ENCODE measurements at regions of chr3 and their contacts with region 1.

Region 1: GRCh38 chr3:185942907-185943759 is 5.3 kb upstream of the TRA2B start:
- DNase-seq: peak; percentile 81 to 84 (median 83)
- H3K4me3 ChIP-seq: peak overlapping the region in 1 of 2 donors; percentile 55
- H3K4me3 Mint-ChIP-seq: peak overlapping the region; percentile 43 to 76 (median 66)
- H3K27ac ChIP-seq: no peak overlapping the region
- H3K27ac Mint-ChIP-seq: peak overlapping the region in 5 of 7 donors; percentile 32 to 75 (median 62)
- H3K4me1 ChIP-seq: peaks cover 14% of the 10 kb centered on the region
- H3K4me1 Mint-ChIP-seq: peaks cover 6 to 24% (median 14%) of the 10 kb centered on the region in 4 donors
- H3K27me3 ChIP-seq: no peaks in the 10 kb centered on the region
- H3K27me3 Mint-ChIP-seq: peaks cover 2 to 3% of the 10 kb centered on the region in 2 donors

Region 2: DNA sequence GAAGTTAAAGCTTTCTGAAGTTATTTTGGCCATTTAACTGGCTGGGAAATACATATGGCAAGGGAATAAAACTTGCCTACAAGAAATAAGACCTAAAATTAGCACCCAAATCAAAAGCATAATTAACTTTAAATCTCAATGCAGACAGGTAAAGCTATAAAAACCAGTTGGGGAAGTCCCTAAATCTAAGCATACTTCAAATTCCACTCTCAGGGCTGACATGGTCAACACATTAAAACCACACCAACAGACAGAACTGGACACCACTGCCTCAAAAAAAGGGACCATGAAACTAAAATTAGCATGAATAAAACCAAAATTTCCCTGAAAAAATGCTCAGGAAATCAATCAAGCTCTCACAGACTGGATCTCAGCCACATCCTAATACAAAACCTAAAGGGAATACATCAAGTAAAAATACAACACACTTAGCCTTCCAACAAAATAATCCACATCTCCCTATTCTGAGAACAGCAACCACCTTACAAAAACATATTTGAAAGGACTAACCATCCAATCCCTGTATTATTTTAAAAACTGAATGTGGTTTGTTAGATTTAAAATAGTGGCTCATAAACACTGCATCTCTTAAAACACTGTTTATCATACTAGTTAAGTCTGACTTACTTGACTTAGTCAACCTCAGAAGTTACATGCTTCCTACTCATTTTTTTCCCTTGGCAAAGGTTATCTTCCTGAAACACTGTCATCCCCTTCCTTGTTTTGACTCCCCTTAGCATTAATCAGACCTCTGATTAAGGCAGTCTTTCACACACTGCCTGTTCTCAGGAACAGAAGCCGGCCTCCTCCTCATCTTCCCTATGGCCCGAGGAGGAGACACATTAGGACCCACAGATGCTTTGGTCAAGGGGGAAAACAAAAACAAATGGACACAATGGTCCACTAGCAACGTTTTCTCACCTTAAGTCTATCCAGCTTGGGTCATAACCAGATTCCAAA is 13.7 kb before region 1 on chr3:
- CTCF ChIA-PET with region 1: interaction called, 143 read pairs
- POLR2A ChIA-PET with region 1: interaction called, 95 read pairs
- intact Hi-C with region 1: no loop called
- DNase-seq: no peak
- H3K4me3 ChIP-seq: peak overlapping the region in 1 of 2 donors; percentile 37
- H3K4me3 Mint-ChIP-seq: peak overlapping the region; percentile 42 to 100 (median 83)
- H3K27ac ChIP-seq: peak overlapping the region; percentile 45
- H3K27ac Mint-ChIP-seq: peak overlapping the region; percentile 2 to 100 (median 73)
- H3K4me1 ChIP-seq: peaks cover 99% of the 10 kb centered on the region
- H3K4me1 Mint-ChIP-seq: peaks cover 76 to 100% (median 91%) of the 10 kb centered on the region in 4 donors
- H3K27me3 ChIP-seq: no peaks in the 10 kb centered on the region
- H3K27me3 Mint-ChIP-seq: no peaks in the 10 kb centered on the region

Region 3: DNA sequence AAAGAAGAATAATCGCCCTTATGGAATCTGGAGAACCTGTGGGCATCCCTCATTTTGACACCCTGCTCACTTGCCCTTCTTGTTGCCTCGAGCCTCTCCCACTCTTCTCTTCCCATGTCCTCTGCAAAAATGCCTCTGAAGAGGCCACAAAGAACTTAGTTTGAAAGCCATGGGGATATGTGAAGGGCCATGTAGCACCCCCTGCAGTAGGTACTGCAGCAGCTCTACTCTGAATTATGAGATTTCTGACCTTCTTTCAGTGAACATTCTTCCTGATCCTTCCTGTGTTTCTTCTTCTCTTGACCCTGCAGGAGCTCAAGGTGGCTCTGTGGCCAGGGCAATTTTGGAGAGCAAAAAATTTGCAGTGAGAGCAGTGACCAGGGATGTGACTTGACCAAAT is 25.0 kb after region 1 on chr3:
- CTCF ChIA-PET with region 1: interaction called, 16 read pairs
- POLR2A ChIA-PET with region 1: no interaction called
- intact Hi-C with region 1: no loop called
- DNase-seq: no peak
- H3K4me3 ChIP-seq: no peak overlapping the region
- H3K4me3 Mint-ChIP-seq: no peak overlapping the region
- H3K27ac ChIP-seq: no peak overlapping the region
- H3K27ac Mint-ChIP-seq: no peak overlapping the region
- H3K4me1 ChIP-seq: no peaks in the 10 kb centered on the region
- H3K4me1 Mint-ChIP-seq: no peaks in the 10 kb centered on the region
- H3K27me3 ChIP-seq: no peaks in the 10 kb centered on the region
- H3K27me3 Mint-ChIP-seq: peaks cover 0 to 2% of the 10 kb centered on the region in 2 donors

Region 4: GRCh38 chr3:186520957-186521842 is 578.1 kb after region 1 on chr3:
- CTCF ChIA-PET with region 1: interaction called, 12 read pairs
- POLR2A ChIA-PET with region 1: interaction called, 14 read pairs
- intact Hi-C with region 1: no loop called
- DNase-seq: no peak
- H3K4me3 ChIP-seq: no peak overlapping the region
- H3K4me3 Mint-ChIP-seq: peak overlapping the region in 2 of 8 donors; percentile 29 to 53
- H3K27ac ChIP-seq: no peak overlapping the region
- H3K27ac Mint-ChIP-seq: peak overlapping the region; percentile 16 to 96 (median 57)
- H3K4me1 ChIP-seq: peaks cover 57% of the 10 kb centered on the region
- H3K4me1 Mint-ChIP-seq: peaks cover 35 to 63% (median 49%) of the 10 kb centered on the region in 4 donors
- H3K27me3 ChIP-seq: no peaks in the 10 kb centered on the region
- H3K27me3 Mint-ChIP-seq: no peaks in the 10 kb centered on the region

Region 5: GRCh38 chr3:187130346-187131066 is 1187.4 kb after region 1 on chr3:
- CTCF ChIA-PET with region 1: no interaction called
- POLR2A ChIA-PET with region 1: no interaction called
- intact Hi-C with region 1: loop called (anchors 5 kb)
- DNase-seq: peak; percentile 74 to 86 (median 83)
- H3K4me3 ChIP-seq: peak overlapping the region in 1 of 2 donors; percentile 37
- H3K4me3 Mint-ChIP-seq: peak overlapping the region; percentile 22 to 82 (median 74)
- H3K27ac ChIP-seq: peak overlapping the region; percentile 74
- H3K27ac Mint-ChIP-seq: peak overlapping the region; percentile 93 to 99 (median 98)
- H3K4me1 ChIP-seq: peaks cover 26% of the 10 kb centered on the region
- H3K4me1 Mint-ChIP-seq: peaks cover 16 to 39% (median 27%) of the 10 kb centered on the region in 4 donors
- H3K27me3 ChIP-seq: no peaks in the 10 kb centered on the region
- H3K27me3 Mint-ChIP-seq: no peaks in the 10 kb centered on the region

Measured in CD4-positive, alpha-beta memory T cell (primary cell).